ENCODE measurements at regions of chr4 and their contacts with region 1.

Region 1: DNA sequence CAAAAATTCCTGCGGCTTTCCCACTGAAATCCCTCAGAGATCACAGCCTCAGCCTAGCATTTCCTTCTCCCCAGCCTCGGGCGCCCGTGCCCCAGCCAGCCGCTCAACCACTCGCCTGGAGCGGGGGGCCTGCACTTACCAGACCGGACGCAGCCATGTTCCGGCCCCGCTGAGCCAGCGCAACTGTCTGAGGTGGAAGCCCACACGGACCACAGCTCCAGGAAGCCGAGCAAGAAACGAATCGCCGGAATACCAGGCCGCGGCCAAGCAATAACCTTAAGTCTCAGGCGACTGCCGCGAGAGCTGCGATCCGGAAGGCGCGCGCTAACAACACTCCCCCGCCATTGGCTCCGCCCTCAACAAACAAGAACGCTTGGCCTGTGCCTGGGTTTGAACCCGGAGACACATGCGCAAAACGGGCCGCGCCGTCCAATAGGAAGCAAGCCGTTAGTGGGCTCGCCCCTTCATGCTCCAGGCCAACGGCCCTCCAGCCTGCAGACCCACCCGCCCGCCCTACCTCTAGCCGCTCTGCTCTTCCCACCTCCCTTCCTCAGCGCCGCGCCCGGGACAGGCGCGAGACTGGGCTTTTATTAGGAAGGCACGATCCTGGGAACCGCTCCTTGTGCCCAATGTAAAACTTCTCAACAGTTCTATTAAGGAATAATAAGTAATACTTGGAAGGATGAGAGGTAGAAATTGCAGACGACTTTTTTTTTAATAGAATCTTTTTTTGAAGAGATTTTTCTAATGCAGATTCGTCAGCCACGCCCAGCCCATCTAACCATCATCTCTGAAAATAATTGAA is at the start of gene CENPC:
- DNase-seq: peak; percentile 86 to 94 (median 90)
- H3K4me3 ChIP-seq: peak within 1 kb of the TSS; percentile 82 to 85
- H3K4me3 Mint-ChIP-seq: peak within 1 kb of the TSS; percentile 97 to 99 (median 99)
- H3K27ac ChIP-seq: peak within 1 kb of the TSS; percentile 95
- H3K27ac Mint-ChIP-seq: peak within 1 kb of the TSS; percentile 99 to 100 (median 100)
- H3K4me1 ChIP-seq: peaks cover 29% of the 10 kb centered on the region
- H3K4me1 Mint-ChIP-seq: peaks cover 24 to 42% (median 35%) of the 10 kb centered on the region in 4 donors
- H3K27me3 ChIP-seq: no peaks in the 10 kb centered on the region
- H3K27me3 Mint-ChIP-seq: no peaks in the 10 kb centered on the region
- total RNA-seq, gene CENPC: 64.0 to 69.1 TPM

Region 2: DNA sequence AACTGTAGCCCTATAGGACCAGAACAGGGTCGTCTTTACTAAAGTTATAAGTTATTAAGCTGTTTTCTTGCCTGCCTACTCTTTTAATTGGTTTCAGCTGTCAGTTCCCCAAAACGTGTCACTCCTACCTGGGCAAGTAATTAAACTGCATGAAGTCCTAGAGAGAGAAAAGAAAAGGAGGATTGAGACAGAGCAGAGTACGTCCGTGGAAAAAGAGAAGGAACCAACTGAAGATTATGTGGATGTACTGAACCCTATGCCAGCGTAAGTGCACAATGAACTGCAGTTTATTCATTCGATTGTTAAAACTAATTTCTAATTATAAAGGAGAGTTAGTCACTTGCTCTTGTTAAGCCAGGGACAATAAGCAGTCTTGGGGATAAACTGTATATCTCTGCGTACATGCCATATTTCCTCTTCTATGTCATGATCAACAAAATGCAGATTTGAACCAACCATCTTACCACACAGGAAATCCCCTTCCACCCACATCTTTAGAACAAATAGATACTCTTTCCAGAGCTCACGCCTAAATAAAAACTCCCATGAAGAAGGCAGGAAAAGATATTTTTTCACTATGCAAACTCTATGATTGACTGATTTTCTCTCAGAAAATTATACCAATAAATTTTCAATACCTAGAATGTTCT is 35.9 kb after region 1 on chr4:
- CTCF ChIA-PET with region 1: no interaction called
- POLR2A ChIA-PET with region 1: interaction called, 13 read pairs
- intact Hi-C with region 1: loop called (anchors 2 kb)
- DNase-seq: peak; percentile 35 to 60 (median 47)
- H3K4me3 ChIP-seq: peak overlapping the region in 1 of 2 donors; percentile 36
- H3K4me3 Mint-ChIP-seq: peak overlapping the region; percentile 62 to 80 (median 70)
- H3K27ac ChIP-seq: no peak overlapping the region
- H3K27ac Mint-ChIP-seq: peak overlapping the region; percentile 7 to 87 (median 47)
- H3K4me1 ChIP-seq: peaks cover 22% of the 10 kb centered on the region
- H3K4me1 Mint-ChIP-seq: peaks cover 15 to 27% (median 19%) of the 10 kb centered on the region in 4 donors
- H3K27me3 ChIP-seq: no peaks in the 10 kb centered on the region
- H3K27me3 Mint-ChIP-seq: no peaks in the 10 kb centered on the region

Region 3: DNA sequence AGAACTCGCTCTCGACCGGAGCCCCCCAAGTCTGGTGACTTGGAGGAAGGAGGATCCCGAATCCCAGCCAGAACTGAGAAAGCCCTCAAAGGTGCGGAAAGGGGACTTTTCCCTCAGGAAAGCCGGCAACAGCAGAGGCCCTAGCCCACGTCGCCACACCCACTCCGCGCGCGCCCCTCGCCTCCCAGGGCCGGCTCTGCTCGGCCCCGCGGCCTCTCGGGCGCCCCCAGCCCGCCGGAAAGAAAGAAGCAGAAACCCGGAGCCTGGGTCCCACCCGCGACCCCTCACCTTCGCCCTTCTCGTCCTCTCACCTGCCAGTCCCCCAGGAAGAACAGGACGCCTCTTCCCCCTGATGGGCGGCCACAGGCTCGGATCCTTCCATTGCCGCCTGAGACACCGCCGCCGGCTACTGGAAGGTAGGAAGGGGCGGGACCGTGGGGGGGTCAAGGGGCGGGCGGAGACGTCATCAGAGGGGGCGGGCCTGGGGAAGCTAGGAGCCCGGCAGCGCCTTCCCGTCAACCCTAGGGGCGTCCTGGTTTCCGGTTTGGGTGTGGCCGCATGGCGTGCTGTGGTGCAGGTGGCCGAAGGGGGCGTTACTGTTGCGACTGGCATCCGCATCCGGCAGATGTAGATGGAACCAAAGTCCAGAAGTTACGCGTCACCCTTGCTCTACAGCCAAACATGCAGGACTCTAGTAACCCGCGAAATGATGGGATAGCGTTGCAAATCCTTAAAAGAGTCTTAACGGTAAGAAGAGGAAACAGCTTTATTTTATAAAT is 155.5 kb after region 1 on chr4 and contains the start of gene UBA6:
- CTCF ChIA-PET with region 1: interaction called, 9 read pairs
- POLR2A ChIA-PET with region 1: interaction called, 12 read pairs
- intact Hi-C with region 1: loop called (anchors 1 kb)
- DNase-seq: peak; percentile 91 to 95 (median 92)
- H3K4me3 ChIP-seq: peak within 1 kb of the TSS; percentile 85 to 93
- H3K4me3 Mint-ChIP-seq: peak within 1 kb of the TSS; percentile 94 to 99 (median 98)
- H3K27ac ChIP-seq: peak within 1 kb of the TSS; percentile 94
- H3K27ac Mint-ChIP-seq: peak within 1 kb of the TSS; percentile 86 to 99 (median 98)
- H3K4me1 ChIP-seq: peaks cover 56% of the 10 kb centered on the region
- H3K4me1 Mint-ChIP-seq: peaks cover 45 to 71% (median 60%) of the 10 kb centered on the region in 4 donors
- H3K27me3 ChIP-seq: no peaks in the 10 kb centered on the region
- H3K27me3 Mint-ChIP-seq: no peaks in the 10 kb centered on the region
- total RNA-seq, gene UBA6: 55.1 to 55.8 TPM

Region 4: DNA sequence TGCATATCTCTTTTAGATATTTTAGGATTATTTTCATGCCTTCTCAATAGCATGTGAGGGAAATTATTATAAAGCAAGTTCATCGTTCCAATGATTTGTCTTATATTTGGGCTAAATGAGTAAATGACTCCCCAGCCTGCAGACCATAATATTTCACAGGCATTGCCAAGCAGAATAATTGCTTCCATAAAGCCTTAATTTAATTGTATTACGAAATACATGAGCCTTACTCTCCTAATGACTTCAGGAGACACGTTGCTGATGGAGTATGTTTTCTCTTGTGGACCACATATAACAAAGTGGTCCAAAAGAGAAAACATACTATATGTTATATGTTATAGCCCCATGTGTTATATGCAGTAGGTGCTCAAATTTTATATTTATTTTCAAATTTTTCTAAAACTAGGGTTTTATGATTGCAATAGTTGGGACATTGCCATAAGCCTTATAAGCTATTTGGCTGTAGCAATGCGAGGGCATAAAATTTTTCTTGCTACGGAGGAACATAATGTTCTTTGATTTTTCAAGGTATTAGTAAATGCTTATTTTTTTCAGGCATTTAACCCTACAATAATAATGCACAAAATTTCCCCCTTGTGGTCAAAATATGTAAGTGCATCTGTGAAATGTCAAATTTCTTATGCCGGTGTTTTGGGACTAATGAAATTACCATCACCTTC is 364.6 kb after region 1 on chr4:
- CTCF ChIA-PET with region 1: interaction called, 19 read pairs
- POLR2A ChIA-PET with region 1: no interaction called
- intact Hi-C with region 1: loop called (anchors 1 kb)
- DNase-seq: peak in 4 of 5 donors; percentile 8 to 19 (median 14)
- H3K4me3 ChIP-seq: no peak overlapping the region
- H3K4me3 Mint-ChIP-seq: no peak overlapping the region
- H3K27ac ChIP-seq: no peak overlapping the region
- H3K27ac Mint-ChIP-seq: no peak overlapping the region
- H3K4me1 ChIP-seq: no peaks in the 10 kb centered on the region
- H3K4me1 Mint-ChIP-seq: no peaks in the 10 kb centered on the region
- H3K27me3 ChIP-seq: no peaks in the 10 kb centered on the region
- H3K27me3 Mint-ChIP-seq: peaks cover 12 to 14% of the 10 kb centered on the region in 2 donors

Measured in CD4-positive, alpha-beta memory T cell (primary cell).